ENCODE measurements at regions of chr16 and their contacts with region 1.

Region 1: DNA sequence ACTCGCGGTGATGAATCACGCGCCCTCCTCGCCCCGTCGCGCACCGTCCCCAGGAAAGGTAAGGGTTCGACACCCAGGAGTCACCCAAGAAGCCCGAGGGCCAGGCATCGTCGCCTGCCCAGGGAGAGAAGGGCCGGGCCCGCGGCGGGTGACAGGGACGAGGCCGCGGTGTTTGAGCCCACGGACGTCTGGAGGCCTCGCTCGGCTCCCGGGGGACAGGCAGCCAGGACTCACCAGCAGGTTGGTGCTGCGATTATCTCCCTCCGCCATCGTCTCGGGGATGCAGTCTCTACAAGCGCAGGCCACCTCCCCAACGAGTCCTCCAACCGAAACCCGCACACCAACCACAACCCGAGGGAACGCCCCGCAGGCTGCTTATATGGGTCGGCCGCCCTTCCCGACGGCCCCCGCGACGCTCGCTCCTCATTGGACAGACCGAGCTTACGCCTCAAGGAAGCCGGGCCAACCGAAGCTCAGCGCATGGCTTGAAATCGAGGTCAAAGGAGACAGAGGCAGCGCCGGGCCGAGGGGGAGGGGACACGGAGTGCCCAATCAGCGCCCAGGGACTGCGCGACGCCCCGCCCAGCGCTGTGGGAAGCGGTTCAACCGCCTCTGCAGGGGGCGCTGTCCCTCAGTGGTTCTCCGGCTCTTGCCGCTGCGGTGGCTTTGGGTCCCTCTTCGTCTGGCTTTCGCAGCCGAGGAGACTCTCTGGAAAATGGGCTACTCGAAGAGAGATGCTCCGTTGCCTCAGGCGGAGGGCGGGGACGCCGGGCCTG is at the start of gene ARL6IP1:
- DNase-seq: peak; percentile 98
- ATAC-seq: peak; percentile 96
- H3K4me3 ChIP-seq: peak within 1 kb of the TSS; percentile 92 to 94
- H3K27ac ChIP-seq: peak within 1 kb of the TSS; percentile 95
- H3K4me1 ChIP-seq: peaks cover 7 to 41% of the 10 kb centered on the region in 2 experiments; a peak in 3 of 4 replicates
- H3K27me3 ChIP-seq: no peaks in the 10 kb centered on the region
- CTCF ChIP-seq: peak; percentile 69 to 84 (median 74)
- POLR2A ChIP-seq: peak; percentile 99
- RAD21 ChIP-seq: peak; percentile 74
- total RNA-seq, gene ARL6IP1: 197 TPM

Region 2: GRCh38 chr16:18789850-18790724 is 11.3 kb before region 1 on chr16 and contains the start of gene RPS15A:
- CTCF ChIA-PET with region 1: interaction called, 18 read pairs
- POLR2A ChIA-PET with region 1: interaction called, 190 read pairs
- RAD21 ChIA-PET with region 1: no interaction called
- intact Hi-C with region 1: no loop called
- DNase-seq: peak; percentile 96
- ATAC-seq: peak; percentile 97
- H3K4me3 ChIP-seq: peak within 1 kb of the TSS; percentile 89 to 91
- H3K27ac ChIP-seq: peak within 1 kb of the TSS; percentile 81
- H3K4me1 ChIP-seq: peaks cover 3 to 26% of the 10 kb centered on the region in 2 experiments
- H3K27me3 ChIP-seq: no peaks in the 10 kb centered on the region
- CTCF ChIP-seq: no peak
- POLR2A ChIP-seq: peak; percentile 94
- RAD21 ChIP-seq: no peak
- total RNA-seq, gene RPS15A: 1,686 TPM

Region 3: GRCh38 chr16:18816286-18816685 is 14.9 kb after region 1 on chr16:
- CTCF ChIA-PET with region 1: interaction called, 13 read pairs
- POLR2A ChIA-PET with region 1: interaction called, 5 read pairs
- RAD21 ChIA-PET with region 1: no interaction called
- intact Hi-C with region 1: no loop called
- DNase-seq: no peak
- ATAC-seq: no peak
- H3K4me3 ChIP-seq: no peak overlapping the region
- H3K27ac ChIP-seq: no peak overlapping the region
- H3K4me1 ChIP-seq: no peaks in the 10 kb centered on the region
- H3K27me3 ChIP-seq: no peaks in the 10 kb centered on the region
- CTCF ChIP-seq: no peak
- POLR2A ChIP-seq: no peak
- RAD21 ChIP-seq: no peak

Region 4: GRCh38 chr16:18834864-18835263 is 33.5 kb after region 1 on chr16:
- CTCF ChIA-PET with region 1: no interaction called
- POLR2A ChIA-PET with region 1: interaction called, 11 read pairs
- RAD21 ChIA-PET with region 1: no interaction called
- intact Hi-C with region 1: no loop called
- DNase-seq: no peak
- ATAC-seq: no peak
- H3K4me3 ChIP-seq: no peak overlapping the region
- H3K27ac ChIP-seq: no peak overlapping the region
- H3K4me1 ChIP-seq: no peaks in the 10 kb centered on the region
- H3K27me3 ChIP-seq: no peaks in the 10 kb centered on the region
- CTCF ChIP-seq: no peak
- POLR2A ChIP-seq: no peak
- RAD21 ChIP-seq: no peak

Region 5: DNA sequence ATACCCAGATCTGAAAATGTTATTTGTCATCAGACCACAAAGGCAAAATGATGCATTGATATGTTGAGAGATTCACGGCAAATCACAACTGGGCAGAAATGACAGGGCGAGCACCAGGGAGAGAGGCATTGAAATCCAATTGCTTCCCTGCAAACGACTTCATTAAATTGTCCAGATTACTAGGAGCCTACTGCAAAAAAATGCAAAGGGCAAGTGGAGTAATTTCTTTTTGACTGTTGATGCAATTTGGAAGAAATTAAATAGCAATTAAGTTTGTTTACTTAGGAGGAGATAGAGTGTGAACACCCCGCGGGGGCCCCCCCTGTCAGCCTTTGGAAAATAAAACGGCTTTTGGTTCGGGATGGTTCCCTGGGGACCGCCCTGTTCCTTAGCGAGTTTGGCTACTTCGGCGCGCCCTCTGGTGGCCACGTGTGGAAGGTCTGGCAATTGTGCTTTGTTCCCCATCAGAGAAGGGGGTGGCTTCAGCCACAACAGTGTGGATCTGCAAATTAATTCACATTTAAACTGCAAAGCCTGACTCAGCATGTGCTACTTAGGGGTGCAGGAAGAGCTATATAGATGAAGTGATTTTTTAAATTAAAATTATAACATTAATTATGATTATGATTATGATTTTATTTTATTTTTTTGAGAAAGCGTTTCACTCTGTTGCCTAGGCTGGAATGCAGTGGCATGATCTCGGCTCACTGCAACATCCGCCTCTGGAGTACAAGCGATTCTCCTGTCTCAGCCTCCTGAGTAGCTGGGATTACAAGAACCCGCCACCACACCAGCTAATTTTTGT is 167.9 kb after region 1 on chr16:
- CTCF ChIA-PET with region 1: interaction called, 9 read pairs
- POLR2A ChIA-PET with region 1: interaction called, 6 read pairs
- RAD21 ChIA-PET with region 1: no interaction called
- intact Hi-C with region 1: loop called (anchors 1 kb)
- DNase-seq: peak; percentile 58
- ATAC-seq: peak; percentile 97
- H3K4me3 ChIP-seq: peak overlapping the region; percentile 26 to 49
- H3K27ac ChIP-seq: no peak overlapping the region
- H3K4me1 ChIP-seq: peaks cover 0 to 7% of the 10 kb centered on the region in 2 experiments; a peak in 3 of 4 replicates
- H3K27me3 ChIP-seq: no peaks in the 10 kb centered on the region
- CTCF ChIP-seq: peak; percentile 83 to 93 (median 89)
- POLR2A ChIP-seq: no peak
- RAD21 ChIP-seq: peak; percentile 90

Region 6: GRCh38 chr16:19067349-19068236 is 266.2 kb after region 1 on chr16 and contains the start of gene COQ7:
- CTCF ChIA-PET with region 1: interaction called, 3 read pairs
- POLR2A ChIA-PET with region 1: interaction called, 11 read pairs
- RAD21 ChIA-PET with region 1: no interaction called
- intact Hi-C with region 1: loop called (anchors 2 kb)
- DNase-seq: peak; percentile 100
- ATAC-seq: peak; percentile 93
- H3K4me3 ChIP-seq: peak within 1 kb of the TSS; percentile 63 to 85
- H3K27ac ChIP-seq: peak within 1 kb of the TSS; percentile 98
- H3K4me1 ChIP-seq: peaks cover 0 to 12% of the 10 kb centered on the region in 2 experiments; a peak in 3 of 4 replicates
- H3K27me3 ChIP-seq: no peaks in the 10 kb centered on the region
- CTCF ChIP-seq: no peak
- POLR2A ChIP-seq: no peak
- RAD21 ChIP-seq: no peak
- total RNA-seq, gene COQ7: 26.6 TPM